CD4-positive, alpha-beta memory T cell (primary cell): ENCODE measurements at regions of chr17 and their contacts with region 1.

Region 1: DNA sequence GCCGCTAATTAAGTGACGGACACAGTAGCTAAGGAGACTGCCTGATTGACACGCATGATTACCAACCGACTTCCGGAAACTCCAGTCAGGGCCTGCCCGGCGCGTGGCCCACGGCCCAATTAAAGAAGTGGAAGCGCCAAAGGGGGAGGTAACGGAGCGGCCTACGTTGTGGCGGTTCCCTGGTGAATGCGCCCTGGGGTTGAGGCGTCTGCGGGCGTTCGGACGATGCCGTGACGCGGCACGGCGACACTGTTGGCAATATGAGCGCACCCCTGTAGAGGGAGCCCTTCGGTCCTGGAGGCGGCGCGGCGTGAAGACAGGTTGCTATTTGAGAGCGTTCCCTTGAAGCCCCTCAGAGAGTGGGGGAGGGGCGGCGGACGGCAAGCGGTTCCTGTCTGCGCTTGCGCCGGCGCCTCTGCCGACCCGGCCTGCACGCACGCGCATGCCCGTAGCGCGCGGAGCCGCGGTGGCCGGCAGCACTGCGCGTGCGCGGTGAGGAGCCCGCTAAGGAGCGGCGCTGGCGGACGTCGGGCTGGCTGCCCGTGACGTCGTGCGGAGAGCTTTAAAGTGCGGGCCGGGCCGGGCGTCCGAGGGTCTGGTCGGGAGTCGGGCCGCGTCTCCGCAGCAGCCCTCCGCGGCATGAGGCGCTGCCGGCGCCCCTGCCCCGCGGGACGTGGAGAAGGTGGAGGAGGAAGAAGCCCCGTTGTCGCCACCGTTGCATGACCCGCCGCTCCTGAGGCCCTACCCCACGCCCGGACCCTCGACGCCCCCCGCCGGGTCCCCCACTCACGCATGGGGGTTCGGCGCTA is at the start of gene ALKBH5:
- DNase-seq: peak; percentile 98 to 99 (median 99)
- H3K4me3 ChIP-seq: peak within 1 kb of the TSS; percentile 85 to 95
- H3K4me3 Mint-ChIP-seq: peak within 1 kb of the TSS; percentile 94 to 99 (median 97)
- H3K27ac ChIP-seq: peak within 1 kb of the TSS; percentile 89
- H3K27ac Mint-ChIP-seq: peak within 1 kb of the TSS; percentile 97 to 99 (median 99)
- H3K4me1 ChIP-seq: peaks cover 48% of the 10 kb centered on the region
- H3K4me1 Mint-ChIP-seq: peaks cover 34 to 65% (median 46%) of the 10 kb centered on the region in 4 donors
- H3K27me3 ChIP-seq: no peaks in the 10 kb centered on the region
- H3K27me3 Mint-ChIP-seq: no peaks in the 10 kb centered on the region
- total RNA-seq, gene ALKBH5: 119 TPM

Region 2: DNA sequence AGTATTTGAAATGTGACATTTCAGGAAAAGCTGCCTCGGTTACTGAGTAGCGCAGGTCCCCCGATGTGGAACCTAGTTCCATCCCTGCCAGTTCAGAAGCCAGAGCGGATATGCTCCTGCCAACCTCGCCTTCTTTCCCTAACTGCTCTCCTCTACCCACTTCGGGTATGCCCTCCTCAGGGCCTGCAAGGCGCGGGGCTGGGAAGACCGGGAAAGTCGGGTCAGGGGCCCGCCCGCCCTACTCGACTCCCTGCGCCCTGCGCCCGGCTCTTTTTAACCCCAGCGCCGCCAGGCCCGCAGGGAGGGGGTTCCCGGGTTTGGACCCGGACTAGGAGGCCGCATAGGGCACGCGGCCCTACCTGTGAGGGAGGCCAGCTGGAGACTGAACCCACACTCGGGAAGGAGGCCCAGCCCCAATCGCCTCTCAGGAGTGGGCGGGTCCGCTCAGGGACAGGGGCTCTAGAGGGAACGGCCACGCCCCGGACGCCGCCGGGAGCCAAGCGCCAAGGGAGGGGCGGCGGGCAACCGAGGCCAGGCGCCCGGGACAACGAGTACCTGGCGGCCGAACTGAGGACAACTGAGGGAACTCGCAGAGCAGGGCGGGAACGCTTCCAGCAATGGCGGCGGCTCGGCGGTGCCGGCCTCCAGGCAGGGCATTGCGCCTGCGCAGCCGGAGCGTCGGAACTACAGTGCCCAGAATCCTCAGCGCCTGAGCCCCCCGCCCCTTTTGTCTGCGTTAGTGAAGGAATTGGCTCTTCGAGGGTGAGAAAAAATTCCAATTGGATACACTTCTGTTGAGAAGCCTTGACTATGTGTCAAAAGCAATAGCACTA is 1530.1 kb before region 1 on chr17 and contains the start of gene ZNF624:
- CTCF ChIA-PET with region 1: no interaction called
- POLR2A ChIA-PET with region 1: no interaction called
- intact Hi-C with region 1: loop called (anchors 10 kb)
- DNase-seq: peak; percentile 81 to 85 (median 83)
- H3K4me3 ChIP-seq: peak within 1 kb of the TSS; percentile 60 to 82
- H3K4me3 Mint-ChIP-seq: peak within 1 kb of the TSS; percentile 73 to 90 (median 86)
- H3K27ac ChIP-seq: peak within 1 kb of the TSS; percentile 69
- H3K27ac Mint-ChIP-seq: peak within 1 kb of the TSS; percentile 3 to 88 (median 79)
- H3K4me1 ChIP-seq: peaks cover 15% of the 10 kb centered on the region
- H3K4me1 Mint-ChIP-seq: peaks cover 17 to 25% (median 21%) of the 10 kb centered on the region in 4 donors
- H3K27me3 ChIP-seq: no peaks in the 10 kb centered on the region
- H3K27me3 Mint-ChIP-seq: peaks cover 2 to 6% of the 10 kb centered on the region in 2 donors
- total RNA-seq, gene ZNF624: 11.5 to 12.0 TPM

Region 3: GRCh38 chr17:17959520-17960361 is 223.8 kb before region 1 on chr17:
- CTCF ChIA-PET with region 1: no interaction called
- POLR2A ChIA-PET with region 1: no interaction called
- intact Hi-C with region 1: no loop called
- DNase-seq: peak in 4 of 5 donors; percentile 26 to 38 (median 28)
- H3K4me3 ChIP-seq: peak overlapping the region; percentile 32 to 75
- H3K4me3 Mint-ChIP-seq: peak overlapping the region; percentile 79 to 97 (median 86)
- H3K27ac ChIP-seq: peak overlapping the region; percentile 65
- H3K27ac Mint-ChIP-seq: peak overlapping the region; percentile 91 to 100 (median 96)
- H3K4me1 ChIP-seq: peaks cover 46% of the 10 kb centered on the region
- H3K4me1 Mint-ChIP-seq: peaks cover 49 to 74% (median 61%) of the 10 kb centered on the region in 4 donors
- H3K27me3 ChIP-seq: no peaks in the 10 kb centered on the region
- H3K27me3 Mint-ChIP-seq: no peaks in the 10 kb centered on the region

Region 4: DNA sequence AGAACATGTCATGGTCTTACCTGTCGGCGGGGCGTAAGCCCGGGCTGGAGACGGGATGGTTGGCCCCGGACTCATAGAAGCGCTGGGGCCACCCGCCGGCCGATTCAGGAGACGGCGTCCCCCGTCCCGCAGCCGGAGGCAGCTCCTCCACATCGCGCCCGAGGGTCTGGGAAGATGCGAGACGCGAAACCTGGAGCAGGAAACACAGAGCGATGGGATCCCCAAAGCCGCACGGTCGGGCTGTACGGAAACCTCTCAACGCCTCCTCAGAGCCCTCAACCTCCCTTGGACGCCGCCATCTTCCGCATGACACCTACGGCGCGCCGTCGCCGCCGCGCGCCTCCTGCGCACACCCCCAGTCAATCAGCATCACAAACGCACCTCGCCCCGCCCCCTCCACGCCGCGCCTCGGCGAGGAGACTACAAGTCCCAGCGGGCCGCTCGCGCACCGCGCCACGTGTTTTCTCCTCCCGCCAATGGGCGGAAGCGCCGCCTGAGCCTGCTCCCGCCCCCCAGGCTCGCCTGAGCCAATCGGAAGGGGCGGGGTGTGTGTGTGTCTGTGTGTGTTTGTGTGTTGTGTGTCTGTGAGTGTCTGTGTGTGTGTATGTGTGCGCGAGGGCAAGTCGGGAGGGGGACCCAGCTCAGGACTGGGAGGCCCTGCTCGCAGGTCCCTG is 144.5 kb before region 1 on chr17 and contains the starts of genes ATPAF2 and GID4:
- CTCF ChIA-PET with region 1: no interaction called
- POLR2A ChIA-PET with region 1: no interaction called
- intact Hi-C with region 1: loop called (anchors 2 kb)
- DNase-seq: peak; percentile 99 to 100 (median 100)
- H3K4me3 ChIP-seq: peak within 1 kb of the TSS; percentile 72 to 79
- H3K4me3 Mint-ChIP-seq: peak within 1 kb of the TSS; percentile 92 to 100 (median 100)
- H3K27ac ChIP-seq: peak within 1 kb of the TSS; percentile 73
- H3K27ac Mint-ChIP-seq: peak within 1 kb of the TSS; percentile 80 to 100 (median 99)
- H3K4me1 ChIP-seq: peaks cover 26% of the 10 kb centered on the region
- H3K4me1 Mint-ChIP-seq: peaks cover 34 to 60% (median 48%) of the 10 kb centered on the region in 4 donors
- H3K27me3 ChIP-seq: no peaks in the 10 kb centered on the region
- H3K27me3 Mint-ChIP-seq: no peaks in the 10 kb centered on the region
- total RNA-seq, gene ATPAF2: 24.1 to 24.3 TPM
- total RNA-seq, gene GID4: 11.1 to 13.1 TPM

Region 5: GRCh38 chr17:18141210-18141803 is 42.2 kb before region 1 on chr17:
- CTCF ChIA-PET with region 1: interaction called, 16 read pairs
- POLR2A ChIA-PET with region 1: interaction called, 8 read pairs
- intact Hi-C with region 1: loop called (anchors 1 kb)
- DNase-seq: peak in 4 of 5 donors; percentile 49 to 61 (median 54)
- H3K4me3 ChIP-seq: no peak overlapping the region
- H3K4me3 Mint-ChIP-seq: no peak overlapping the region
- H3K27ac ChIP-seq: no peak overlapping the region
- H3K27ac Mint-ChIP-seq: peak overlapping the region in 1 of 7 donors; percentile 48
- H3K4me1 ChIP-seq: no peaks in the 10 kb centered on the region
- H3K4me1 Mint-ChIP-seq: peaks cover 0 to 6% (median 4%) of the 10 kb centered on the region in 4 donors
- H3K27me3 ChIP-seq: no peaks in the 10 kb centered on the region
- H3K27me3 Mint-ChIP-seq: no peaks in the 10 kb centered on the region

Region 6: GRCh38 chr17:18217412-18218015 is 34.0 kb after region 1 on chr17:
- CTCF ChIA-PET with region 1: interaction called, 5 read pairs
- POLR2A ChIA-PET with region 1: interaction called, 14 read pairs
- intact Hi-C with region 1: no loop called
- DNase-seq: peak; percentile 55 to 73 (median 63)
- H3K4me3 ChIP-seq: no peak overlapping the region
- H3K4me3 Mint-ChIP-seq: no peak overlapping the region
- H3K27ac ChIP-seq: no peak overlapping the region
- H3K27ac Mint-ChIP-seq: peak overlapping the region in 1 of 7 donors; percentile 26
- H3K4me1 ChIP-seq: no peaks in the 10 kb centered on the region
- H3K4me1 Mint-ChIP-seq: peaks cover 0 to 4% (median under 1%) of the 10 kb centered on the region in 4 donors
- H3K27me3 ChIP-seq: no peaks in the 10 kb centered on the region
- H3K27me3 Mint-ChIP-seq: no peaks in the 10 kb centered on the region

Region 7: DNA sequence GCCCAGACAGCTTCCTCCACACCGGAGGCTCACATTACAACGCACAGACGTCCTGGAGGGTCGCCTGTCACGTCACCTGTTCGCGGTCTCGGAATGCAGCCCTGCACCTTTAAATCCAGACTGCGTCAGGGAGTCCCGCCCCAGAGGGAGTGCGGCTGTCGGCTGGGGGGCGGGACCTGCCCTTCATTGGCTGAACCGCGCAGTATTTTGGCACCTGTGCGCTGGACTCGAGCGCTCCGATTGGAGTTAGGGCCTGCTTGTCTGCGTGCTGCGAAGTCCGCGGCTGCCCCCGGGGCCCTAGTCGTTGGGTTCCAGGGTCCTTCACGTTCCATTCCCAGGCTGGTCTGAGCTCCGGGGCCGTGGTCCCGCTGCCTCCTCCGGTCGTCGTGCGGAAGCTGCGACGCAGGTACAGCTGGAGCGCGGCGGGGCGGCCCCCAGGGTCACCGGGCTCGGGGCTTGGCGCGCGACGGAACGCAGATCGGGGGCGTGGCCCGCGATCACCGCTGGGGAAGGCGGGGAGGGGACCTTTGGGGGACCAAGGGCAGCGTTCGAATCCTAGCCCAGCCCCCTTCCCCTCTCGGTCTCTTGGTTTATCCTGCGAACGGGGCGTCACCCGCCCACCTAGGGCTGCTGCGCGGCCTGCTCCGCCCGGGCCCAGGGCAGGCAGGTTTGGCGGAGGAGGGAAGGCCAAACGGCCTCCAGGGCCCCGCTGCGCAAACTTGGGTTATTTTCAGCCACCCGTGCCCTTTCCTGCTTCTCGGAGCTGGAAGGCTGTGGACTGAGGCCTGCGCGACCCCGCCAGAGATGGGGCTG is 77.0 kb after region 1 on chr17 and contains the start of gene MIEF2:
- CTCF ChIA-PET with region 1: no interaction called
- POLR2A ChIA-PET with region 1: interaction called, 17 read pairs
- intact Hi-C with region 1: loop called (anchors 1 kb)
- DNase-seq: peak; percentile 90 to 94 (median 92)
- H3K4me3 ChIP-seq: peak within 1 kb of the TSS; percentile 66 to 91
- H3K4me3 Mint-ChIP-seq: peak within 1 kb of the TSS; percentile 80 to 90 (median 82)
- H3K27ac ChIP-seq: peak within 1 kb of the TSS; percentile 96
- H3K27ac Mint-ChIP-seq: peak within 1 kb of the TSS; percentile 86 to 94 (median 89)
- H3K4me1 ChIP-seq: peaks cover 53% of the 10 kb centered on the region
- H3K4me1 Mint-ChIP-seq: peaks cover 17 to 56% (median 37%) of the 10 kb centered on the region in 4 donors
- H3K27me3 ChIP-seq: no peaks in the 10 kb centered on the region
- H3K27me3 Mint-ChIP-seq: no peaks in the 10 kb centered on the region
- total RNA-seq, gene MIEF2: 18.2 to 19.3 TPM

Region 8: GRCh38 chr17:18363101-18364049 is 179.8 kb after region 1 on chr17 and contains the start of gene SHMT1:
- CTCF ChIA-PET with region 1: no interaction called
- POLR2A ChIA-PET with region 1: interaction called, 12 read pairs
- intact Hi-C with region 1: loop called (anchors 5 kb)
- DNase-seq: peak; percentile 87 to 90 (median 88)
- H3K4me3 ChIP-seq: peak within 1 kb of the TSS; percentile 54 to 76
- H3K4me3 Mint-ChIP-seq: peak within 1 kb of the TSS; percentile 90 to 96 (median 94)
- H3K27ac ChIP-seq: peak within 1 kb of the TSS; percentile 59
- H3K27ac Mint-ChIP-seq: peak within 1 kb of the TSS; percentile 58 to 93 (median 89)
- H3K4me1 ChIP-seq: peaks cover 10% of the 10 kb centered on the region
- H3K4me1 Mint-ChIP-seq: peaks cover 6 to 19% (median 16%) of the 10 kb centered on the region in 4 donors
- H3K27me3 ChIP-seq: no peaks in the 10 kb centered on the region
- H3K27me3 Mint-ChIP-seq: no peaks in the 10 kb centered on the region
- total RNA-seq, gene SHMT1: 14.6 to 15.9 TPM

Region 9: GRCh38 chr17:18377437-18378204 is 194.1 kb after region 1 on chr17 and contains the start of gene EVPLL:
- CTCF ChIA-PET with region 1: no interaction called
- POLR2A ChIA-PET with region 1: no interaction called
- intact Hi-C with region 1: no loop called
- DNase-seq: no peak
- H3K4me3 ChIP-seq: no peak within 1 kb of the TSS
- H3K4me3 Mint-ChIP-seq: no peak within 1 kb of the TSS
- H3K27ac ChIP-seq: no peak within 1 kb of the TSS
- H3K27ac Mint-ChIP-seq: peak within 1 kb of the TSS in 1 of 7 donors; percentile 69
- H3K4me1 ChIP-seq: no peaks in the 10 kb centered on the region
- H3K4me1 Mint-ChIP-seq: peaks cover 0 to 10% (median 6%) of the 10 kb centered on the region in 4 donors
- H3K27me3 ChIP-seq: no peaks in the 10 kb centered on the region
- H3K27me3 Mint-ChIP-seq: peaks cover 1 to 9% of the 10 kb centered on the region in 2 donors
- total RNA-seq, gene EVPLL: not detected